ENCODE measurements at regions of chr20 and their contacts with region 1.

Region 1: GRCh38 chr20:13610184-13610583 is 28.5 kb downstream of the TASP1 start:
- DNase-seq: peak; percentile 41
- ATAC-seq: peak; percentile 94
- H3K4me3 ChIP-seq: no peak overlapping the region
- H3K27ac ChIP-seq: no peak overlapping the region
- H3K4me1 ChIP-seq: no peaks in the 10 kb centered on the region
- H3K27me3 ChIP-seq: no peaks in the 10 kb centered on the region
- CTCF ChIP-seq: peak; percentile 64
- EP300 ChIP-seq: no peak
- POLR2A ChIP-seq: no peak
- RAD21 ChIP-seq: 0 out of 2 replicates have a peak, but pooled peaks have one; percentile 14

Region 2: GRCh38 chr20:13588049-13588448 is 22.1 kb before region 1 on chr20:
- CTCF ChIA-PET with region 1: no interaction called
- POLR2A ChIA-PET with region 1: no interaction called
- in situ Hi-C with region 1: no loop called
- intact Hi-C with region 1: no loop called
- DNase-seq: no peak
- ATAC-seq: no peak
- H3K4me3 ChIP-seq: no peak overlapping the region
- H3K27ac ChIP-seq: no peak overlapping the region
- H3K4me1 ChIP-seq: peaks cover 11% of the 10 kb centered on the region
- H3K27me3 ChIP-seq: no peaks in the 10 kb centered on the region; a peak in 1 of 5 replicates
- CTCF ChIP-seq: no peak
- EP300 ChIP-seq: no peak
- POLR2A ChIP-seq: no peak
- RAD21 ChIP-seq: no peak

Region 3: DNA sequence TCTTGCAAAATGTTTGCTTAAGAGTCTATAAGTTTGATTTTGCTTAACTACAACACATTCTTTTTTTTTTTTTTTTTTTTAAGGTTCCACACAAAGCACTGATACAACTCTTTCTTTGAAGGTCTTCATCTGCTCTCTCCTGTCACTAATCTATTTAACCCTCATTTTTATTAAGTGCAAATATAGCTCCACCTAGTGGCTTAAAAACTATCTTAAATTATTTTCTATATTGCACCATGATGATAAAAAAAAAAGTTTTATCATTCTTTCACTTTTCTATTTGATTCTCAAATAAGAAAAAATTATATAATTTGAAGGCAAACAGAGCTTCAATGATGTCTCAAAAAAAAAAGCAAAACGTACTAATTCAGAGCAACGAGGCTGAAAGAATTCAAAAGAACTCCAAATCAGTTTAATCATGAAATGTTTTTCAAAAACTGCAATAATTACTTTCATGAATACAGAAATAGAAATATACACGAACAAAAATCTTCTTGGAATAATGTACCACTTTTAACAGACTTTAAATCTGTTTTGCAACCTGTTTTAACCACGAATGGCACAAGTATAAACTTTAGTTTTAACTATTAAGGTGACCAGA is 161.8 kb after region 1 on chr20:
- CTCF ChIA-PET with region 1: interaction called, 9 read pairs
- POLR2A ChIA-PET with region 1: no interaction called
- in situ Hi-C with region 1: no loop called
- intact Hi-C with region 1: loop called (anchors 1 kb)
- DNase-seq: peak; percentile 28
- ATAC-seq: peak; percentile 46; the same call in 1 of the 3 replicates
- H3K4me3 ChIP-seq: no peak overlapping the region
- H3K27ac ChIP-seq: no peak overlapping the region
- H3K4me1 ChIP-seq: no peaks in the 10 kb centered on the region
- H3K27me3 ChIP-seq: no peaks in the 10 kb centered on the region
- CTCF ChIP-seq: peak; percentile 41
- EP300 ChIP-seq: no peak
- POLR2A ChIP-seq: no peak
- RAD21 ChIP-seq: no peak

Region 4: DNA sequence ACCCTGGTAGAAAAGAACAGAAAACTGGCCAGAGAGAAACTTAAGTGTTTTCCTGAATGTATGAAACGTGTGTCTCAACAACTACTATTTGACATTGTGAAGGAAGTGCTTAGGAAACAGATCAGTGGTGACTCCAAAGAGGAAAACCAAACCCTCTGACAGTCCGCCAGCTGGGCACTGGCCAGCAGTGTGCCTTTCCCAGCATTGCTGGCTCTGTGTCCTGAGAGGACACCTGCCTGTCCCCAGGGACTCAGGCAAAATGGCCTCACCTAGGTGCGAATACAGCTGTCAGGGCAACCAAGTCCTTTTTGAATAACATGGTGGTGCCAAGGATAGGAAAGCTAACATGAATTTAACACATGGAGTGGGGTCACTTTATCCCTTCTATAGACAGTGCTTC is 247.1 kb after region 1 on chr20:
- CTCF ChIA-PET with region 1: no interaction called
- POLR2A ChIA-PET with region 1: no interaction called
- in situ Hi-C with region 1: no loop called
- intact Hi-C with region 1: no loop called
- DNase-seq: no peak
- ATAC-seq: no peak
- H3K4me3 ChIP-seq: no peak overlapping the region
- H3K27ac ChIP-seq: no peak overlapping the region
- H3K4me1 ChIP-seq: no peaks in the 10 kb centered on the region
- H3K27me3 ChIP-seq: peaks cover 0 to 12% of the 10 kb centered on the region in 2 experiments; a peak in 2 of 5 replicates
- CTCF ChIP-seq: no peak
- EP300 ChIP-seq: no peak
- POLR2A ChIP-seq: no peak
- RAD21 ChIP-seq: no peak